Activated CD8-positive, alpha-beta T cell treated with anti-CD3 and anti-CD28 coated beads, Interleukin-2, amount 10 ng/mL, durations not matched to agents 7 days and 5 days (primary cell): ENCODE measurements at regions of chr2 and their contacts with region 1.

Region 1: DNA sequence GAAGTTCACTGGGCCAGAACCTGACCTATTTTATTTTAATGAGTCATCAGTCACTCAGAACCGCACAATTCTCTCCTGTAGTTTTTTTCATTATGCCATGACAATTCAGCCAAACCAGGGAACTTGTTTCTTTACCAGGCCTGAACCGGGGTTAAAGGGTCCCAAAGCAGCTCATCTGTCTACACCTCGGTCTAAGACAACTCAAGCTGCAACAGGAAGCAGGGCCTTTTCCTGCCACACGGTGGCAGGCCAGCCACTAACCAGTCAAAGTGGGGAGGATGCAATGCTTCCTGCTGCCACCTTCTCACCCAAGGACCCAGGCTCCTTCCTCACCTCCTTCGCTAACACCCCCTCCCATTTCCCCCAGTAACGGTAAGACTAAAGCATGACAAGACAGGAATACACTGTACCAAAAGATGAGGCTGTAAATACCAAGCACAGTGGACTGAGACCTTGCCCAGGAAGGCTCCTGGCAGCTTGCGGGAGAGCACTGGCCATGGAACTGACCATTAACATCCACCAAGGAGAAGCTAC is 56.7 kb upstream of the ACKR3 start:
- DNase-seq: peak; percentile 83
- ATAC-seq: peak; percentile 97
- H3K4me3 Mint-ChIP-seq: no peak overlapping the region
- H3K27ac Mint-ChIP-seq: no peak overlapping the region
- H3K4me1 Mint-ChIP-seq: peaks cover 6% of the 10 kb centered on the region
- H3K27me3 Mint-ChIP-seq: peaks cover 23% of the 10 kb centered on the region

Region 2: GRCh38 chr2:236526455-236527158 is 13.6 kb after region 1 on chr2:
- CTCF ChIA-PET with region 1: interaction called, 45 read pairs
- POLR2A ChIA-PET with region 1: interaction called, 5 read pairs
- DNase-seq: no peak
- ATAC-seq: no peak
- H3K4me3 Mint-ChIP-seq: no peak overlapping the region
- H3K27ac Mint-ChIP-seq: no peak overlapping the region
- H3K4me1 Mint-ChIP-seq: no peaks in the 10 kb centered on the region
- H3K27me3 Mint-ChIP-seq: peaks cover 15% of the 10 kb centered on the region

Region 3: DNA sequence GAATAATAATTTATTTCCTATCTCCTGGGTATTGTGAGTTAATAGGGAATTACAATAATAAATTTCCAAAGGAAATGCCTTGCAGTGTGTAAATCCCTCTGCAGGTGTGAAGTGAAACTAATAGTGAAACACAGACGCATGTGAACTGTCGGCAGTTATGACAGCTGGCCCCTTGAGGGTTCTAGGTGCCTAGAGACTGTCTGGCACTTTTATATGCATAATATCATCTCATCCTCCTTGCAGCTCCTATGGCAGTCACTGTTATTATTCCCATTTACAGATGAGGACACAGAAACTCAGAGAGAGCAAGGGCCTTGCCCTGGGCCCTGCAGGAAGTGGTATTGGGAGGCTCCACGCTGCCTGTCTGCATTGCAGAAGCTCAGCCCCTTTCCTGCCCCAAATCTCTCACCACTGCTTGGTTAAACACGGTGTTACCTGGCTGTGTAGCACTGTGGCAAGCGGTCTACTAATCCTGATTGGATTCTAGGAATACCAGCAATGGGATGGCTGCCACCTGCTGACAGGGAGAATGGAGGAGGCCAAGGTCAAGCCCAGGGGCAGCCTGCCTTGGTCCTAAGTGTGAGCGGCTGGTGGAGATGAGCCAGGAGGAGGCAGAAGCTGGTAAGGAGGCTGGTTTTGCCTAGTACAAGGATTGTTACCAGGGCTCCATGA is 23.9 kb after region 1 on chr2:
- CTCF ChIA-PET with region 1: interaction called, 81 read pairs
- POLR2A ChIA-PET with region 1: no interaction called
- DNase-seq: peak; percentile 78
- ATAC-seq: peak; percentile 95
- H3K4me3 Mint-ChIP-seq: peak overlapping the region; percentile 99
- H3K27ac Mint-ChIP-seq: peak overlapping the region; percentile 98
- H3K4me1 Mint-ChIP-seq: peaks cover 55% of the 10 kb centered on the region
- H3K27me3 Mint-ChIP-seq: no peaks in the 10 kb centered on the region

Region 4: DNA sequence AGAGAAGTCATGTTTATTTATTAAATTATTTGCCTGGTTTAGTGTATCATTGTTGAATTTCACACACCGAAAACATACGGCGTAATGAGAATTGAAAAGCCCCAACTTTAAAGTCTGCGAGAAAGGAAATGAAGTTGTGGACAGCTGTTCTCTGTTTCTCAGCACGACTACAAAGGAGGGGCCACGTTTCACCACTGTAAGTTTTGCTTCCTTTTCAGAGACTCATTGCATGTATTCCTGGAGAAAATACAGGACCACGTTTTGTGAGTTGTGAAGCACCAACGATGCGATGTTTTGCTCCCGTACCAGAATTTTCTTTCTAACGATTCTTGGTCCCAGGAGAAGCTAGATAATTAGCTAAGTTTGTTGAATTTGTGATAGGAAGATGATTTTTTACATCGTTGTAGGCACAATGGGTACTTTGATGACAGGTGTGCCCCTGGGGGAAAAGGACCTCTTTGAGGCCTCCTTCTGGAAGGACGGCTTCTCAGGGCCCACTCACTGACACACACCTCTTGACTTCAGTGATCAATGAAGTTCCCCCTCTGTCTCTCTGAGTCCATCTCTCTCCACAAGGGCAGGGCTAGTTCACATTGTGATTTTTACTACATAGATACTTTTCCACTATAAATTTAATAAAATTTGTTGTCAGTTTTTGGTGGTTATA is 33.0 kb after region 1 on chr2:
- CTCF ChIA-PET with region 1: interaction called, 33 read pairs
- POLR2A ChIA-PET with region 1: interaction called, 4 read pairs
- DNase-seq: peak; percentile 69
- ATAC-seq: peak; percentile 61
- H3K4me3 Mint-ChIP-seq: peak overlapping the region; percentile 75
- H3K27ac Mint-ChIP-seq: peak overlapping the region; percentile 90
- H3K4me1 Mint-ChIP-seq: peaks cover 92% of the 10 kb centered on the region
- H3K27me3 Mint-ChIP-seq: no peaks in the 10 kb centered on the region

Region 5: DNA sequence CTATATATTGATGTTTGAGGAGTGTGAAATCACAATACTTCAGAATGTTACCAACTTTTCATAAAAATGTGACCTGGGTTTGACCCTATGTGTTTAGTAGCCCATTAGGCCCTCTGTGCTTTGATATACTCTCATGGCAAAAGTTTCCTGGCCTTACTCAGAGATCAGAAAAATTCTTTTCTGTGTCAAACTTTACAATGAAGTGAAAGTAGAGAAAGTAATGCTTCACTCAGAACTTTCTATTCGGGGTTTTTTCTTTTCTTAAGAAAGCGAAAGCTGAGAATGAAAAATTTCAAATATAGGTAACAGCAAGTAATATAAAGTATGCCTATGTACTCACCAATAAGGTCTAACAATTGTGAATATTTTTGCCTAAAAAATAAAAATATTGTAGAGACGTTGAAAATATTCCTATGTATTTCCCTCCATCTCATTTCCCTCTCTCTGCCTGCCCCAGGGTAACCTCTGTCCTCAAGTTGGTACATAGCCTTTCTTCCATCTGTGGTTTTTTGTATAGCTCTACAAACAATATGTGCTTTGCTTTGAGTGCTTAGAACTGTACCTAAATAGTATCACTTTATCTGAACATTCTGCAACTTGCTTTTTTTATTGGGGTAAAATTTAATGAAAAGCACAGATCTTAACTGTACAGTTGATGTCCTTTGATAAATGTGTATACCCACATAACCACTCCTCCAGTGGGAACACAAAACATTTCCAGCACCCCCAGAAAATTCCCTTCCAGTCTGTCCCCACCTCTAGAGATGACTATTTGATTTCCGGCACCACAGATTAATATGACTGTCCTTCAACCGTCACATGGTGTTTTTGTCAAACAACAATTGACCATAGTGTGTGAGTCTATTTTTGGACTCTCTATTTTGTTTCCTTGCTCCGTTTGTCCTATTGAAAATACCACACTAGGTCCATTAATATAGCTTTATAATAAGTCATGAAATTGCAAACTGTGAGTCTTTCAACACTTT is 46.3 kb after region 1 on chr2:
- CTCF ChIA-PET with region 1: interaction called, 32 read pairs
- POLR2A ChIA-PET with region 1: no interaction called
- DNase-seq: no peak
- ATAC-seq: no peak
- H3K4me3 Mint-ChIP-seq: no peak overlapping the region
- H3K27ac Mint-ChIP-seq: no peak overlapping the region
- H3K4me1 Mint-ChIP-seq: peaks cover 44% of the 10 kb centered on the region
- H3K27me3 Mint-ChIP-seq: no peaks in the 10 kb centered on the region

Region 6: DNA sequence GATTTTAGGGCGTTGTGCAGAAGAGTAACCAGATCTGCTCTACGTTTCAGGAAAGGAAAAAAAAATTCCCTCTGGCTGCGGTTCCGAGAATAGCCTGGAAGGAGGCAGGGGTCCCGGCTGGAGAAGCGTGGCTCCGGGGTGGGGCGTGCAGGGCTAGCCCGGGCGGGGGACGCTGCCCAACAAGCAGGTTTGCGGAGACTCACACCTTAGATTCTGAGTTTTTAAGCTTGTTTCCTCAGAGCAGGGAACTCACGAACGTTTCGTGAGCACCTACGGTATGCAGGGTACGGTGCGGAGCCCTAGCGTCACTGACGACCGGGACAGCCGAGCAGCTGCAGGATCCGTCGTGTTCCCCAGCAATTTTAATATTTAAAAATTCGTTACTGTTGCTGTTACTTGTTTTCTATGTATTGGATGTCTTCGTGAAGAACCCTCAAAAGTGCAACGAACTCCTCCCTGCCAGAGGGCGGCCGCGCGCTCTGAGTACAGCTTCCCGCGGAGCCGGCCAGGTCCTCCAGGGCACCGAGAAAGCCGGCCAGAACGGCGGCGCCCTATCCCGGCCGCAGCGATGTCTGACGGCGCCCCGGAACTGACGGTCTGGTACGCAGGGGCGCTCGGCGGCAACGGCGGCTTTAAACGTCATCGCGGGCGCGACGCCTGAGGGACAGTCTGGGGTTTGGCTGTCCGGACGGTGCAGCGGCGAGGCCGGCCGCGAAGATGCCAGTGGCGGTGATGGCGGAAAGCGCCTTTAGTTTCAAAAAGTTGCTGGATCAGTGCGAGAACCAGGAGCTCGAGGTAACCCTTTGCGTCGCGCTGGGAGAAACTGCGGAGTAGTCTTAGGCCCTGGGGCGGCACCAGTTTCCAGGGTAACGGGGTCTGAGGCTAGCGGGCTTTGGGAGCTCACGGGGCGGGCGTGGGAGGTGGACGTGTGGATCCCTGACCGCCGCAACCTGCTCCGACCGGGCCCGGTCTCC is 572.6 kb after region 1 on chr2 and contains the start of gene COPS8:
- CTCF ChIA-PET with region 1: interaction called, 14 read pairs
- POLR2A ChIA-PET with region 1: no interaction called
- DNase-seq: peak; percentile 94
- ATAC-seq: peak; percentile 99
- H3K4me3 Mint-ChIP-seq: peak within 1 kb of the TSS; percentile 91
- H3K27ac Mint-ChIP-seq: peak within 1 kb of the TSS; percentile 97
- H3K4me1 Mint-ChIP-seq: peaks cover 13% of the 10 kb centered on the region
- H3K27me3 Mint-ChIP-seq: no peaks in the 10 kb centered on the region
- total RNA-seq, gene COPS8: 39.5 to 42.2 TPM